ENCODE measurements at regions of chr5 and their contacts with region 1.

Region 1: GRCh38 chr5:68252673-68253623 is 37.4 kb downstream of the PIK3R1 start:
- DNase-seq: peak; percentile 68
- ATAC-seq: peak; percentile 83 to 86

Region 2: GRCh38 chr5:67246108-67246507 is 1006.8 kb before region 1 on chr5:
- intact Hi-C with region 1: loop called (anchors 2 to 10 kb)
- DNase-seq: no peak
- ATAC-seq: peak; percentile 44 to 61

Region 3: GRCh38 chr5:67493676-67494075 is 759.3 kb before region 1 on chr5:
- intact Hi-C with region 1: loop called in 1 of 2 experiments (anchors 5 kb)
- DNase-seq: no peak
- ATAC-seq: peak; percentile 83 to 85

Region 4: DNA sequence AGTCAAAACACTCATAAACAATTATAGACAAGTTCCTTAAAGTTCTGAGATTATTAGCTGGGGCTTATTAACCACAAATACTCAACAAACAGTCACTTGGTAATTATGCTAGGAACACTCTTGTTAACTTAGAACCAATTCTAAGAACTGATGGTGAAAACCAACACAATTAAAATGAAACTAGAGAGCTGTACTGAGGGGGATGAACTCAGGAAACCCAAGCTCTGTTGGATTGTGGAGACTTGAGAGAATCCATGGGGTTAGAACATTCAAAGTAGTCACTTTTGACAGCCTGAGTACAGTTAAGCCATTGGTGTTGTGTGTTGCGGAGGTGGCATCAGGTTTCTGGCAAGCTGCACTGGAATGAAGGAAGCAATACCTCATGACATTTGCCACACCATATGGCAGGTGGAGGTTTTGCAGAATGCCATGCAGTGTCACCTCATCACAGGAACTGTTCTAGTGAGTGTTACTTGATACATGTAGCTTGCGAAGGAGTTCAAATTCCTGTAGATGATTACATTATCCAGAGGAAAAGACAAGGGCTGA is 575.5 kb before region 1 on chr5:
- intact Hi-C with region 1: loop called in 1 of 2 experiments (anchors 10 kb)
- DNase-seq: no peak
- ATAC-seq: peak in 1 of 2 donors; percentile 38

Region 5: DNA sequence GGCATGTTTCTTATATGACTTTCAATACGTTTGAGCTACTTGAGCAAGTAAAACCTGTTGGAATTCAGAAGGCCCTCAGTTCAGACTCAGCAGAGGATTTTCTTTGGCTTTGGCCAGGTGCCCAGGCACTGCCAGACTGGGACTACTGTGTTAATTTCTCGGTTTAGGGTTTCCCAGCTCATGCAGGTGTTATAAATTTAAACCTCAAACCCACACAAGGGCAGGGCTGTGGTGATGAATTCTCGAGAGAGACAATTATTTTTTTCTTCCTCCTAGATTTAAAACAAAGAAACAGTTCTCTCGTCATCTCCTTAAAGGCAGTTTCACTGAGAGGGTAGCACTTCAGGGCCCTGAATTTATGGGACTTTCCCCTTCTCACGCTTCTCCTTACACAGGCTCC is 443.4 kb before region 1 on chr5:
- intact Hi-C with region 1: loop called in 1 of 2 experiments (anchors 10 kb)
- DNase-seq: no peak
- ATAC-seq: no peak

Region 6: GRCh38 chr5:67908126-67908765 is 344.7 kb before region 1 on chr5:
- intact Hi-C with region 1: no loop called
- DNase-seq: no peak
- ATAC-seq: no peak

Region 7: DNA sequence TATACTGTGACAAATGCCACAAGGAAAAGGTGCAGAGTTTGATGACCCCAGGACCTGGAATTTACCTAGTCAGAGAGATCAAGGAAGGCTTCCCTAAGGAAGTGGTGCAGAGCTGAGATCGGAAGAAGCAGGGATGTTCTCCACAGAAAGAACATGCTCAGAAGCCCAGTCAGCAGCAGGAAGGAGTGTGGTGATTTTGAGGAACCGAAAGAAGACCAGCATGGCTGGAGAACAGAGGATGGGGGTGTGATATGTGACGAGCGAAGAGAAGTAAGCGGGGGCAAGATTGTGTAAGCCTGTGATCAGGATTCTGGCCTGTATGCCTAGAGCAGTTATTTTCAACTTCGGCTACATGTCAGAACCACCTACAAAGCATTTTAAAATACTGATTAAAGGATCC is 56.1 kb before region 1 on chr5:
- intact Hi-C with region 1: no loop called
- DNase-seq: no peak
- ATAC-seq: peak; percentile 45 to 62

Region 8: DNA sequence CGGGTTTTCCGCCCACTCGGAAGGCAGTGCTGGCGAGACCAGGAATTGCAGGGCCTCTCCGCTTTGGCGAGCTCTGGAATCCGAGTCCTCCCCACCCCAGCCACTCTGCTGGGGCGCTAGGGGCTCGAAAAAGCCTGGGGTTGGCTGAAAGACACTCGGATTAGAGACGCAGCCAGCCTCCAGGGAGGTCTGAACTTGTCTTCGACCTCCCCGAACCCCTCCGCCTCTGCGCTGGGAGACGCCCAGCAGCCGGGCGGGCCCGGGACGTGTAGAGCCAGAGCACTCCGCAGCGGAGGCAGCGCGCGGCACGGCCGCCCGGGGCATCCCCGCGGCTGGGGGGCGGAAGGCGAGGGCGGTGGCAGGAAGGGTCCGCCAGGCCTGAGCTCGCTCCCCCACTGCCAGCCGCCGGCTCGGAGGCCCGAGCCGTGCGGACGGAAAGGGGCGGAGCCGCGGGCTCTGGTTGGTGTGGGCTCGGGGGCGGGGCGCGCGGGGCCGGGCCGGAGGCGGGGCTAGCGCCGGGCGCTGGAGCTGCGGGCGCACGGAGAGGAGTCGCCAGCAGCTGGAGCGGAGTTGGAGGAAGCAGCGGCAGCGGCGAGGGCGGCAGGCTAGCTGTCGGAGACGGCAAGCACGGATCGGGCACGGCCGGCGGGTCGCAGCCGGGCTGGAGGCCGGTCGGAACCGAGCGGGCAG is 37.6 kb before region 1 on chr5 and contains the start of gene PIK3R1:
- intact Hi-C with region 1: loop called in 1 of 2 experiments (anchors 5 kb)
- DNase-seq: peak; percentile 95
- ATAC-seq: peak; percentile 96 to 98
- total RNA-seq, gene PIK3R1: 61.8 to 127 TPM

Measured in left cardiac atrium (tissue), 4 donors.